Caco-2 (cell line): ENCODE measurements at regions of chr1 and their contacts with region 1.

Region 1: DNA sequence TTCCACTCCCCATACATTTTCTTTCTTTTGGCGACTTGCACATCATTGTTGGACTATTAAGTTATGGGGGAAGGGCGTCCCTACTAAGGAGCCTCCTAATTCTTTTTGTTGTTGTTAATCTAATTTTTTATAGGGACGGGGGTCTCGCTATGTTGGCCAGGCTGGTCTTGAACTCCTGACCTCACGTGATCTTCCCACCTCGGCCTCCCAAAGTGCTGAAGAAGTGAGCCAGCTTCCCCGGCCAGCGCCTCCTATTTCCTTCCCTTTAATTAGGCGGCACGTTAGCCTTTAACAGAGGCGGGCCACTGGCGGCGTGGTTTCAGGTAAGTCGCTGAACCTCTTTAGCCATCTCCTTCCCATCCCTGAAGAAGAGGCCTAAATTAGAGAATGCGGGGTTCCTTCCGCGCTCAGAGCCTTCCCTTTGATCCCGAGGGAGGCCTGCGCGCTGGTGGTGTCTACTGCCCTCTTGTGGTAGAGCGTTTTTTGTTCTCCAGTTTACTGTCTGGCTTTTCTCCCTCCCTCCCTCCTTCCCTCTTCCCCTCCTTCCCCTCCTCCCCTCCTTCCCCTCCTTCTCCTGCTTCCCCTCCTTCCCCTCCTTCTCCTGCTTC is 38.1 kb downstream of the TNFRSF9 start:
- DNase-seq: peak; percentile 66 to 79
- H3K4me3 ChIP-seq: no peak overlapping the region
- H3K4me3 Mint-ChIP-seq: no peak overlapping the region
- H3K27ac Mint-ChIP-seq: no peak overlapping the region
- H3K4me1 ChIP-seq: no peaks in the 10 kb centered on the region
- H3K4me1 Mint-ChIP-seq: no peaks in the 10 kb centered on the region
- H3K27me3 ChIP-seq: no peaks in the 10 kb centered on the region
- H3K27me3 Mint-ChIP-seq: no peaks in the 10 kb centered on the region
- CTCF ChIP-seq: peak; percentile 74 to 78

Region 2: GRCh38 chr1:7808253-7808844 is 94.2 kb before region 1 on chr1:
- CTCF ChIA-PET with region 1: interaction called, 9 read pairs
- POLR2A ChIA-PET with region 1: no interaction called
- intact Hi-C with region 1: loop called (anchors 1 kb)
- DNase-seq: no peak
- H3K4me3 ChIP-seq: no peak overlapping the region
- H3K4me3 Mint-ChIP-seq: no peak overlapping the region
- H3K27ac Mint-ChIP-seq: no peak overlapping the region
- H3K4me1 ChIP-seq: no peaks in the 10 kb centered on the region
- H3K4me1 Mint-ChIP-seq: no peaks in the 10 kb centered on the region
- H3K27me3 ChIP-seq: no peaks in the 10 kb centered on the region
- H3K27me3 Mint-ChIP-seq: no peaks in the 10 kb centered on the region
- CTCF ChIP-seq: peak in 1 of 2 experiments; percentile 55

Region 3: GRCh38 chr1:7856345-7856744 is 46.2 kb before region 1 on chr1:
- CTCF ChIA-PET with region 1: no interaction called
- POLR2A ChIA-PET with region 1: no interaction called
- intact Hi-C with region 1: loop called (anchors 10 kb)
- DNase-seq: no peak
- H3K4me3 ChIP-seq: no peak overlapping the region
- H3K4me3 Mint-ChIP-seq: no peak overlapping the region
- H3K27ac Mint-ChIP-seq: no peak overlapping the region
- H3K4me1 ChIP-seq: peaks cover 23% of the 10 kb centered on the region
- H3K4me1 Mint-ChIP-seq: peaks cover 8% of the 10 kb centered on the region
- H3K27me3 ChIP-seq: no peaks in the 10 kb centered on the region
- H3K27me3 Mint-ChIP-seq: no peaks in the 10 kb centered on the region
- CTCF ChIP-seq: no peak

Region 4: DNA sequence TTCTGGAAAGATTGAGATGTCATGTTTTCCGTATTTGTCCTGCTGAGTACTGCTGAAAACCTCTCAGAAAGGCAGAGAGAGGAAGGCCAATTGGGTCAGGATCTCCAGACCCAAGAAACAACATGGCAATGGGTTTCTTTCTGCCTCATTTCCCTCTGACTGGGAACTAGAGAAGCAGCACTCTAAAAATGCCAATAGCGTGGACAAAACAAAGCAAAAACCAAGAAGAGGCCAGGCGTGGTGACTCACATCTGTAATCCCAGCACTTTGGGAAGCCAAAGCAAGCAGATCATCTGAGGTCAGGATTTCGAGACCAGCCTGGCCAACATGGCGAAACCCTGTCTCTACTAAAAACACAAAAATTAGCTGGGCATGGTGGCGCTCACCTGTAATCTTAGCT is 19.7 kb after region 1 on chr1:
- CTCF ChIA-PET with region 1: no interaction called
- POLR2A ChIA-PET with region 1: no interaction called
- intact Hi-C with region 1: no loop called
- DNase-seq: no peak
- H3K4me3 ChIP-seq: no peak overlapping the region
- H3K4me3 Mint-ChIP-seq: no peak overlapping the region
- H3K27ac Mint-ChIP-seq: no peak overlapping the region
- H3K4me1 ChIP-seq: no peaks in the 10 kb centered on the region
- H3K4me1 Mint-ChIP-seq: no peaks in the 10 kb centered on the region
- H3K27me3 ChIP-seq: no peaks in the 10 kb centered on the region
- H3K27me3 Mint-ChIP-seq: no peaks in the 10 kb centered on the region
- CTCF ChIP-seq: no peak

Region 5: DNA sequence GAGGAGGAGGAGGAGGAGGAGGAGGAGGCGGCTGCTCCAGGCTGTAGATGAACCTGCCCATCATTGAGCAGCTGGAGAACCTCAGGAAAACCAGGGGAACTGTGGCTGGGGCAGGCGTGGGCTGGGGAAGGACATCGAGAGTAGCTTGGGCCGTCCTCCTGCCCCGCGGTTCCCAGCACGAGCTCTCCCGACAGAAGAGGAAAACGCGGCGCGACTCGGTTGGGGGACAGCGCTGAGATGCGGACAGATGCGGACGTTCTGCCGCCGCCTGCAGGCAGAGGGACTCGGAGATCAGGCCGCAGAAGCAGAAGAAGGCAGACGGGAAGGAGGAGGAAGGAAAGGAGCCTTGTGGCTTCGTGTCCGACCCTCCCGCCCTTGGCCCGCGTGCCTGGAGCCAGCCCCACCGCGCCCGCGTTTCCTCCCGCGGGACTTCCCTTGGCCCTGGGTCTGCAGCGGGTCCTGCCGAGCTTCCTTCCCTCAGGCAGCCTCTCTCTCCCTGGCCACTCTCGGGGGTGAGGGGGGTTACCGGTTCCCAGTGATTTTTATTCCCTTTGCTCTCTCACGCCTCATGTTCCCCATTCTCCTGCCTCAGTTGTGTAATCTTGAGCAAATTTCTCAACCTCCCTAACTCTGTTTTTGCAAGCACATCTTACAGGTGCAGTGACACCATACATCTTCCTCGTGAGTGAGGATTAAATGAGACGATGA is 39.8 kb after region 1 on chr1:
- CTCF ChIA-PET with region 1: no interaction called
- POLR2A ChIA-PET with region 1: interaction called, 9 read pairs
- intact Hi-C with region 1: loop called (anchors 5 kb)
- DNase-seq: peak; percentile 68
- H3K4me3 ChIP-seq: peak overlapping the region; percentile 33
- H3K4me3 Mint-ChIP-seq: peak overlapping the region; percentile 67
- H3K27ac Mint-ChIP-seq: no peak overlapping the region
- H3K4me1 ChIP-seq: peaks cover 16% of the 10 kb centered on the region; the same call in 1 of the 2 replicates
- H3K4me1 Mint-ChIP-seq: peaks cover 26% of the 10 kb centered on the region
- H3K27me3 ChIP-seq: no peaks in the 10 kb centered on the region
- H3K27me3 Mint-ChIP-seq: no peaks in the 10 kb centered on the region
- CTCF ChIP-seq: peak in 1 of 2 experiments; percentile 66

Region 6: GRCh38 chr1:8097077-8097799 is 194.7 kb after region 1 on chr1:
- CTCF ChIA-PET with region 1: no interaction called
- POLR2A ChIA-PET with region 1: no interaction called
- intact Hi-C with region 1: no loop called
- DNase-seq: peak in 1 of 2 experiments; percentile 16
- H3K4me3 ChIP-seq: no peak overlapping the region
- H3K4me3 Mint-ChIP-seq: peak overlapping the region; percentile 34
- H3K27ac Mint-ChIP-seq: peak overlapping the region; percentile 86
- H3K4me1 ChIP-seq: peaks cover 46% of the 10 kb centered on the region
- H3K4me1 Mint-ChIP-seq: peaks cover 38% of the 10 kb centered on the region
- H3K27me3 ChIP-seq: no peaks in the 10 kb centered on the region
- H3K27me3 Mint-ChIP-seq: no peaks in the 10 kb centered on the region
- CTCF ChIP-seq: no peak

Region 7: DNA sequence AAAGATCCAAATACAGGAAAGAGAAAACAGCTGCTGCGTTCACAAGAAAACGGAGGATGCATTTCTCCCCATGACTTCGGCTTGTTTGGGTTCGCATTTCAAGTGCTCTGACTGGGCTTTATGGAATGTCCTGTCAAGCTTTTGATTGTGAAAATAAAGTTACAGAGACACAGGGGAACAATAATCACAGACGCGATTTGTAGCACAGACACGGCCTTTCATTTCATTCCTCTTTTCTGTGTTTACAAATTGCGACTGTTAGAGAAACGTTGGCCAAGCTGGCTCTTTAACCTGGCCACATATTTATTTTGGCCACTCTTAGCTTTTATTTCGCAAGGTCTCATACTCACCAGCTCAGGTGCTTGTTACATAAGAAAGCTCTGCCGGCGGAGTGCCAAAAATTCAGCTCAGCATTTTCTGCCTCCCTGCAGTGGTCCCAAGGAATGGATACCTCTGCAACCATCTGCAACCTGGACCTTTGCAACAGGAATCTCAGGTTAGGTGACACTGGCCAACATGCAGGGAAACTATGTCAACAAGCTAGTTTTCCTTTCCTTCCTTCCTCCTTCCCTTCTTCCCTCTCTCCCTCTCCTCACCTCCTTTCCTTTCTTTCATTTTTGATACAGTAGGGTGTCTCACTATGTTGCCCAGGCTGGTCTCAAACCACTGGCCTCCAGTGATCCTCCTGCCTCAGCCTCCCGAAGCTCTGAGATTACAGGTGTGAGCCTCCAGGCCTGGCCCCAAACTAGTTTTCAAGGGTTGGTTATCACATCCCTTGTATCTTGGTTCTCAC is 357.1 kb after region 1 on chr1:
- CTCF ChIA-PET with region 1: no interaction called
- POLR2A ChIA-PET with region 1: no interaction called
- intact Hi-C with region 1: no loop called
- DNase-seq: peak in 1 of 2 experiments; percentile 25
- H3K4me3 ChIP-seq: peak overlapping the region; percentile 11; the same call in 1 of the 2 replicates
- H3K4me3 Mint-ChIP-seq: peak overlapping the region; percentile 53
- H3K27ac Mint-ChIP-seq: peak overlapping the region; percentile 87
- H3K4me1 ChIP-seq: peaks cover 16% of the 10 kb centered on the region
- H3K4me1 Mint-ChIP-seq: peaks cover 26% of the 10 kb centered on the region
- H3K27me3 ChIP-seq: no peaks in the 10 kb centered on the region
- H3K27me3 Mint-ChIP-seq: no peaks in the 10 kb centered on the region
- CTCF ChIP-seq: no peak